ENCODE measurements at regions of chr1 and their contacts with region 1.

Region 1: GRCh38 chr1:243255791-243256512 is at the start of gene SDCCAG8:
- DNase-seq: peak; percentile 94
- H3K4me3 Mint-ChIP-seq: peak within 1 kb of the TSS; percentile 95
- H3K27ac Mint-ChIP-seq: peak within 1 kb of the TSS; percentile 99
- H3K4me1 Mint-ChIP-seq: peaks cover 36% of the 10 kb centered on the region
- H3K27me3 Mint-ChIP-seq: no peaks in the 10 kb centered on the region
- total RNA-seq, gene SDCCAG8: 14.6 and 17.6 TPM in 2 replicates

Region 2: DNA sequence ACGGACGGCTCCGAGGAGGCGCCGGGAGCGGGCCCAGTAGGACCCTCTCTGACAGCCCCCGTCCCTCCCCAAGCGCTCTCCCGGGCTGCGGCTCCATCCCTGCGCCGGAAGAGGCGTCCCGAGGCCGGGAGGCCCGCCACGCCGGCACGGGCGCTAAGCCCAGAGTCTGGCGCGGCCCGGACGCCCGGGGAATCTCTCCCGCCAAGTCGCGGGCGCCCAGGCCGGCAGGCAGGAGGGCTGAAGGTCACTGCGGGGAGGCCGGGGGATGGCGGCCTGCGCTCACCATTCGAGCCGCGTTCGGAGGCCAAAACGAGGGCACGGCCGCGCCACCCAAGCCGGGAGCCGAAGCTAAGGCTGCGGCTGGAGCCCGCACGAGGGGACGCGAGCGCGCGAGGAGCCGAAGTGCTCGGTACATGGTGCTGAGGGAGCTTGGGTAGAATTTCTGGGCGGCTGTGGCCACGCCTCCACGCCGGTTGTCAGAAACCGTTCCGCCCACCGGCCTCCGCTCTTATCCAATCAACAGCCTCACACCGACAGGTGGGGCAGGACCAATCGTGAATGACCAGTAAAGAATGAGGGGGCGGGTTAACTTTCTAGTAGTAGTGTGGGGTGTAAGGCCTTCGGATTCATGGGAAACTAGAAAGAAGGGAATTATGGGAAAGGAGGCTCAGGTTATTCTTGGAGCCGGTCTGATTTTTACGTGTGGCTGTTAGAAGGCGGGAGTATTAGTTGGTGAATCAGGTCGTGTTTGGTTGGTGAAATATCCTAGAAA is 1736.5 kb before region 1 on chr1 and contains the start of gene FH:
- intact Hi-C with region 1: loop called (anchors 10 kb)
- DNase-seq: peak; percentile 91
- H3K4me3 Mint-ChIP-seq: peak within 1 kb of the TSS; percentile 91
- H3K27ac Mint-ChIP-seq: peak within 1 kb of the TSS; percentile 82
- H3K4me1 Mint-ChIP-seq: peaks cover 26% of the 10 kb centered on the region
- H3K27me3 Mint-ChIP-seq: peaks cover 26% of the 10 kb centered on the region
- total RNA-seq, gene FH: 94.5 and 101 TPM in 2 replicates

Region 3: DNA sequence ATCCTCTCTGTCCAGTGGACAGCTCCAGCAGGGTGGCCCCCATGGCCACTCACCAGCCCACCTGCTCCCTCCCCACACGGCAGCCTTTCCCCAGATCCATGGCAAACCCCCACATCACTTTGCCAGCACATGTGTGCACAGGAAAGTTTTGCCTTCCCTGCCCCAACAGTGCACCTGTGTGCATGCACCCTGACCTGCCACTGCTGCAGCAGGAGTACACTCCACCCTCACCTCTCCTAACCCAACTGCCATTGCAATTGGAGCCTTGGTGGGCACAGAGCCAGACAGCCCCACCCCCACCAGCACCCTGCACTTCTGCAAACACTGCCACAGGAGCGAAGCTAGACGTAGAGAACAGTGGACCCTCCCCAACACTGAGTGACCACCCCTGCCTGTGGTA is 309.7 kb before region 1 on chr1:
- intact Hi-C with region 1: no loop called
- DNase-seq: no peak
- H3K4me3 Mint-ChIP-seq: no peak overlapping the region
- H3K27ac Mint-ChIP-seq: no peak overlapping the region
- H3K4me1 Mint-ChIP-seq: no peaks in the 10 kb centered on the region
- H3K27me3 Mint-ChIP-seq: no peaks in the 10 kb centered on the region

Region 4: GRCh38 chr1:243179714-243180113 is 76.2 kb before region 1 on chr1:
- intact Hi-C with region 1: loop called (anchors 10 kb)
- DNase-seq: no peak
- H3K4me3 Mint-ChIP-seq: peak overlapping the region; percentile 8
- H3K27ac Mint-ChIP-seq: peak overlapping the region; percentile 46
- H3K4me1 Mint-ChIP-seq: peaks cover 17% of the 10 kb centered on the region
- H3K27me3 Mint-ChIP-seq: no peaks in the 10 kb centered on the region

Region 5: DNA sequence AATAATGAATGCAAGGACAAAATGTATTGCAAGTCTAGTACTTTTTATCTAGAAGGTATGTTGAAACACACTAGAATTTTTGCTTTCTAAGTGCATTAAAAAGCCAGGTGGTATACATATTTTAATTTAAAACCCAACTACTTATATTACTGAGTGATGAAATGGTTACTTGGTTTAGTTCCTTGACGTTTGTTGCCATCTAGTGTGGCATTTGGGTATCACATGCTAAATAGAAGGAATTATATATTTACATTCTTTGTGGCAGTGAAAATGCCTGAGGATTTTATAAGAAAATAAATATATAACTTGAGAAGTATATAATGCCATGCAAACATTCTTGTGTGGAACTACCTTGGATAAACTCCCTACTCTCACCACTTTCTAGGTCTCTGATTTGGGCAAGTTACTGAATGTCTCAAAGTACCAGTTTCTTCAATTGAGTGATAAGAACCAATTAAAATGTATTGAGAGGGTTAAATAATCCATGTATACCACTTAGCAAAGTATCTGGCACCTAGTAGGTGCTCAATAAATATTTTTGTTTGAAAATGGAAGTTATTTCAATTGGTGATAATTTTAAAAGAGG is 69.4 kb after region 1 on chr1:
- intact Hi-C with region 1: loop called (anchors 1 kb)
- DNase-seq: no peak
- H3K4me3 Mint-ChIP-seq: no peak overlapping the region
- H3K27ac Mint-ChIP-seq: no peak overlapping the region
- H3K4me1 Mint-ChIP-seq: no peaks in the 10 kb centered on the region
- H3K27me3 Mint-ChIP-seq: no peaks in the 10 kb centered on the region

Region 6: DNA sequence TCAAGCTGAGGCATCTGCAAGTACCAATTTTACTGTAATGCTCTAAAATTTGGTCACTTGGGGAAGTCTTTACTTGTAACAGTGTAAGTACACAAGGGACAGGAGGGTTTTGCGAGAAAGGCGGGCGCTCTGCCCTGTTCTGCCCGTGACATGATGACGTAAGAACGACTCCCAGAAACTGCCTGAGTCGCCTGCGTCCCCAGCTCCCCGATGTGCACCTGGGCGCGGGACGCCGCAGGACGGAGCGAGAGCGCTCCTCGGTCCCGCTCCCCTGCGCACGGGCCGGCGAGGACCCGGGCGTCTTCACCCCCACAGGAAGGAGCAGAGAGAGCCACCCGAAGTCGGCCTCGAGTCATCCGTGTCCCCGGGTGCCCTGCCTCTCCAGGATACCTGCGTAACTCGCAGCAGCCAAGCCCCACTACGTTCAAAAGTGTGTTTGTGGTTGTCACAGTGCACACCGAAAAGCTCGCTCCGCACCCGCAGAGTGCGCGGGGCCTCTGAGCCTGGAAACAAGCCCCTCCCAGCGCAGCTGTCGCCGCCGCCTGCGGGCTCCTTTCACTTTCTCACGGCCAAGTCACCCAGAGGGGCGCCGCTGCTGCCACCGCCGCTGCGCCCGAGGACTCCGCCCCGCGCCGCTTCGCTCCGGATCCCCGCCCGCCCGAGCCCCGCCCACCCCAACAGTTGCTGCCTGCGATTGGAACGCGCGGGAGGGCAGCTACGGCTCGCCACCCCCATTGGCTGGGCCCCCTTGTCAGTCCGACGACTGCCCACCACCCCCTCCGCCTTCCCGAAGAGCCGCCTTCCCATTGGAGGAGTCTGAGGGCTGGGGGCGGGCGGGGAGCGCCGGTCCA is 791.9 kb after region 1 on chr1:
- intact Hi-C with region 1: loop called (anchors 1 kb)
- DNase-seq: peak; percentile 93
- H3K4me3 Mint-ChIP-seq: peak overlapping the region; percentile 92
- H3K27ac Mint-ChIP-seq: peak overlapping the region; percentile 91
- H3K4me1 Mint-ChIP-seq: peaks cover 36% of the 10 kb centered on the region
- H3K27me3 Mint-ChIP-seq: peaks cover 30% of the 10 kb centered on the region

Region 7: DNA sequence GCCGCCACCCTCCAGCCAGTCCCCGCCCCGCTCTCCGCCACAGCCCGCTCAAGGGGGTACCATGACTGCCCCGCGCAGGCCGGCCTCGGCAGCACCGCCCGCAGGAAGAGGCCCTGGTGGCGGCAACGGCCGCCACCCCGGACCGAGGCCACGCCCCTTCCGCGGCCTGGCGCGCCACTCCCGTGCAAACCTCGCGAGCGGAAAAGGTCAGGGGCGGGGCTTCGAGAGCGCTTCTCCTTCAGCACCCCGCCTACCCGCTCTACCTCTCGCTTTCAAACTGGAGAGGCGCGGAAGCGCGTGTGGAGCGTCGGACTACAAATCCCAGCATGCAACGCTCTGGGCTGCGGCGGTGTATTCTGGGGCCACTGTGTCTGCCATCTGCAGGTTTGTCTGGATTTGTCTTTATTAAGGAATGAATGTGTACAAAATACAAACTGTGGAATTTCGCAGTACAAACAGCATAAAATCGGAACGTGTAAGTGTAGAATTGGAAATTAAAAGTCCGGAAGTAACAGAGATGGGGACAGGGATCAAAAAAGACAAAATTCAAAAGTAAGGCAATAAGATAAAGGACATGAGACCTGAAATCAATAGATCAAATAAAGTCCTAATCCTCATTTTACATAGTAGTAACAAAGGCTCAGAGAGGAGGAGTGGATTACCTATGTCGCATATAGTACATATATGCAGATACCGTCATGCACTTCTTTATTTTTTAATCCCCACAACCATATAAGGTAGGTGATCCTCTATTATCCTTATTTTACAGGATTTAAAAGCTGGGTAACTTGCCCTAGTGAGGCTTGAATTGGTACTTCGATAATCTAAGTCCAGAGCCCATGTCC is 1196.2 kb after region 1 on chr1:
- intact Hi-C with region 1: loop called (anchors 1 kb)
- DNase-seq: peak; percentile 98
- H3K4me3 Mint-ChIP-seq: peak overlapping the region; percentile 95
- H3K27ac Mint-ChIP-seq: peak overlapping the region; percentile 96
- H3K4me1 Mint-ChIP-seq: peaks cover 41% of the 10 kb centered on the region
- H3K27me3 Mint-ChIP-seq: no peaks in the 10 kb centered on the region

Region 8: DNA sequence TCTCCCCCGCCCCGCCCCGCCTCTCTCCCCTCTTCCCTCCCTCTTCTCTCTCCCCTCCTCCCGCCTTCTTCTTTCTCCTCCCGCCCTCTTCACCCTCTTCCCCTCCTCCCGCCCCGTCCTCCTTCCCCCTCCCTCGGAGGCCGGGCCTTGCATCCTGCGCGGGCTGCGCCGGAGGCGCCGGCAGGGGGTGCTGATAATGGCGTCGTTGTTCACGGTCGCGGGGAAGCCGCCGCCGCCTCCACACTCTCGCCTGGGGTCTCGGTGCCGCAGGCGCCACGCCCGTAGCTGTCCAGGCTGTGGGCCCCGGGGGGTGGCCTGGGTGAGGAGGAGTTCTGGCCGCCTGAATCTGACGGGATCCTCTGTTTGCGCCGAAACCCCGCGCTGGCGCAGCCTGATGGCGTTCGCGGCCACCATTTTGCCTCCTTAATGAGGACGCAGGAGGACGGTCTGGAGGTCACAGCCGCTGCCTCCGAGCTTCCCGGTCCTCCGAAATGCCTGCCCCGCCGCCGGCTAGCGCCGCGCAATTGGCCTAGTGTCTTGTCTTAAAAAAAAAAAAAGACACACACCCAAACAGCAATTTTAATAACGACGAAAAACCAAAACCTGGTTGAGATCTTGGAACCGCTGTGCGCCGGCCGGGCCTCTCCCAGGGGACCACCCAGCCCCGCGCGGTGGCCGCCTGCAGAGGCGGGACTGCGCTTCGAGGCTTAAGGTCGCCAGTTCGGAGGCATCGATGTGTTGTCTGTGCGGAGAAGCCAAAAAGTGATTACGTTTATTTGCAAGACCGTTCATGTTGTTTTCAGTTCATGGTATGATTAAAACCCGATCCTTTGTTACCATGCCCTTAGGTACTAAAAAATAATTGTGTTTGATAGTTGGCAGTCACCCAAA is 1715.0 kb after region 1 on chr1:
- intact Hi-C with region 1: loop called (anchors 2 kb)
- DNase-seq: peak; percentile 82
- H3K4me3 Mint-ChIP-seq: peak overlapping the region; percentile 92
- H3K27ac Mint-ChIP-seq: peak overlapping the region; percentile 98
- H3K4me1 Mint-ChIP-seq: peaks cover 21% of the 10 kb centered on the region
- H3K27me3 Mint-ChIP-seq: peaks cover 2% of the 10 kb centered on the region